ENCODE measurements at regions of chr22 and their contacts with region 1.

Region 1: DNA sequence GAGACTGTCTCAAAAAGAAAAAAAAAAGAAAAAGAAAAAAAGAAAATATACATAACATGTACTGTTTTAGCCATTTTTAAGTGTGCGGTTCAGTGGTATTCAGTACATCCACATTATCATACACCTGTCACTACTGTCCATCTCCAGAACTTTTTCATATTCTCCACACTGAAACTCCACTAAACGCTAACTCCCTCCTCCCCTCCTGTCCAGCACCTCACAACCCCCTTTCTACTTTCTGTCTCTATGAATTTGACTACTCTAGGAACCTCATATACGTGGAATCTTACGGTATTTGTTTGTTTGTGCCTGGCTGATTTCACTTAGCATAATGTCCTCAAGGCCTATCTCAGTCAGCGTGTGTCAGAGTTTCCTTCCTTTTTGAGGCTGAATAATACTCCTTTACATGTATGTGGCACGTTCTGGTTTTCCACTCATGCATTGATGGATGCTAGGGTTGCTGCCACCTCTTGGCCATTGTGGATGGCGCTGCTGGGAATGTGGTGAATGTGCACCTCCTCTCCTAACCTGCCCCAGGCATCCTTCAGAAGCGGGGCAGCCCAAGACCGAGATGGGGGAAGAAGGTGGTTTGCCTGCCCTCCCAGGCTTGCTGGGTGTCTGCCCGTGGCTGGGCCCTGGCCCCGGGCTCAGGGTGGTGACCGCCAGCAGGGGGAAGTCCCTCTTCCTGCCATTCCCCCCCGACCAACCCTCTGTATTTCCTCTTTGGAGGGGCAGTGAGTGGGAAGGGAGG is 60.5 kb downstream of the BCR start:
- DNase-seq: peak; percentile 79
- H3K4me3 Mint-ChIP-seq: no peak overlapping the region
- H3K27ac Mint-ChIP-seq: peak overlapping the region; percentile 73
- H3K4me1 Mint-ChIP-seq: peaks cover 93% of the 10 kb centered on the region
- H3K27me3 Mint-ChIP-seq: no peaks in the 10 kb centered on the region

Region 2: DNA sequence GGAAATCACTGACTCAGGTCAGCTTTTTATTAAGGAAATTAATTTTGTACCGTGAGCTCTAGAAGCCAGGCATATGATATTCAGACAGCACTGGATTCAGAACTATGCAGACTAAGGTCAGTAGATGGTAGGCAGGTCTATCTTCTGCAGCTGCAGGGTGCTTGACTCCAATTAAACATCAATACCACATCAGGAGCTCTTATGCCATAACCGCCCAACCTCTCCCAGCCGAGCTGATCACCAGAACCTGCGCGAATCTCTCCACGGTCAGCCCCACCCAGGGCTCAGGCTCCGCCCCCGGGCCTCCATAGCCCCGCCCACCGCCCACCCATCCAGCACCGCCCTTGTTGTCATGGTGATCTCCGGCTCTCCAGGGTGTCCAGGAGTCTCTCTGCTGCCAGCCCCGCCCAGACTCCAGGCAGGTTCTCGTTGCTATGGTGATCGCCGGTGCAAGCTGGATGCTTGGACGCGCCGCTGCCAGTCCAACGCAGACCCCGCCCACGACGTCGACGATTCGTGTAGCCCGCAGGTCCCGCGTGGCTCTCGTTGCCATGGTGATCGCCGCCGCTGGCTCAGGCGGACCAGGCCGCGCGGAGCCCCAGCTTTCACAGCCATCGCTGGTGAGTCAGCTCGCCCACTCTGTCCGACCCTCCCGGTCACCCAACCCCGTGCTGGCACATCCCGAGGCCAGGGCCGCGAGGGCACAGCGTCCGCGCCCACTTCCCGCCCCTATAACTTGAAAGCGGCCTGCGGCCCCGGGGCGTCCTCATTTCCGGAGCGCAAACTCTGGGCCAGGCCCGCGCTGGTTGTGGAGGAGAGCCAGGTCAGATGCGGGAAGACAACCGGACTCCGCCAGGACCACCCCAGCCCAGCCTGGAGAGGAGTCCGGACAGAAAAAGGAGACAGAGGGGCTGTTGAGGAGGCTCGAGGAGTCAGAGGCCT is 95.6 kb before region 1 on chr22 and contains the start of gene RAB36:
- CTCF ChIA-PET with region 1: no interaction called
- intact Hi-C with region 1: loop called (anchors 1 kb)
- DNase-seq: peak; percentile 82
- H3K4me3 Mint-ChIP-seq: peak within 1 kb of the TSS; percentile 63
- H3K27ac Mint-ChIP-seq: no peak within 1 kb of the TSS
- H3K4me1 Mint-ChIP-seq: peaks cover 44% of the 10 kb centered on the region
- H3K27me3 Mint-ChIP-seq: no peaks in the 10 kb centered on the region
- total RNA-seq, gene RAB36: not detected

Region 3: DNA sequence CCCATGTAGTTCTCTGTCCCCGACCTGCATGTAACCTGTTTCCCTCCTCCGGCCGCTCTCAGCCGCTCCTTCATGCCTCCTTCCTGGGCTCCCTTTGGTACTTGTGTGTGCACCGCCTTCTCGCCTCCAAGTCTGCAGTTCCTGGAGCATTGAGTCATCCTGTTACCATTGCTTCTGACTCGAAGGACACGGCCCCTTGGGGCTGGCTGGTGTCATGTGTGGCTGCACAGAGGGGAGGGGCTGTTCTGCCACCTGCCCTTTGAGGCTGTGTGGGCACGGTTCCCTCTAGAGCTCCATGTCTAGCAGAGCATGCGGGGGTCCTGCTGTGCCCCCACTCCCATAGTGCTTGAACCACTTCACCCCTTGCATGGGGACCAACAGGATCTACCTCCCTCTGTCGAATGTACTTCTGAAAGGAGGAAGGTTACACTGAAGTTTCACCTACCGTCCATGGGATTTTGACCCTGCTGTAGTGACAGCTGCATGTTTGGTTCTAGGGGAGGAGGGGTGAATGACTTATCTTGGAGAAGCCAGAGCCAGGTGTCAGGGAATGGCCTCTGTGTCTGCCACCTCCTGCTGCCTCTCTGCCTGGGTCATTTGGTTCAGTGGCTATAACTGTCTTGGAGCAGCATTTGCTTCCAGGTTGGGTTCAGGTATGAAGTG is 20.9 kb before region 1 on chr22:
- CTCF ChIA-PET with region 1: interaction called, 8 read pairs
- intact Hi-C with region 1: loop called (anchors 1 kb)
- DNase-seq: peak; percentile 89
- H3K4me3 Mint-ChIP-seq: peak overlapping the region; percentile 77
- H3K27ac Mint-ChIP-seq: peak overlapping the region; percentile 90
- H3K4me1 Mint-ChIP-seq: peaks cover 97% of the 10 kb centered on the region
- H3K27me3 Mint-ChIP-seq: no peaks in the 10 kb centered on the region

Region 4: DNA sequence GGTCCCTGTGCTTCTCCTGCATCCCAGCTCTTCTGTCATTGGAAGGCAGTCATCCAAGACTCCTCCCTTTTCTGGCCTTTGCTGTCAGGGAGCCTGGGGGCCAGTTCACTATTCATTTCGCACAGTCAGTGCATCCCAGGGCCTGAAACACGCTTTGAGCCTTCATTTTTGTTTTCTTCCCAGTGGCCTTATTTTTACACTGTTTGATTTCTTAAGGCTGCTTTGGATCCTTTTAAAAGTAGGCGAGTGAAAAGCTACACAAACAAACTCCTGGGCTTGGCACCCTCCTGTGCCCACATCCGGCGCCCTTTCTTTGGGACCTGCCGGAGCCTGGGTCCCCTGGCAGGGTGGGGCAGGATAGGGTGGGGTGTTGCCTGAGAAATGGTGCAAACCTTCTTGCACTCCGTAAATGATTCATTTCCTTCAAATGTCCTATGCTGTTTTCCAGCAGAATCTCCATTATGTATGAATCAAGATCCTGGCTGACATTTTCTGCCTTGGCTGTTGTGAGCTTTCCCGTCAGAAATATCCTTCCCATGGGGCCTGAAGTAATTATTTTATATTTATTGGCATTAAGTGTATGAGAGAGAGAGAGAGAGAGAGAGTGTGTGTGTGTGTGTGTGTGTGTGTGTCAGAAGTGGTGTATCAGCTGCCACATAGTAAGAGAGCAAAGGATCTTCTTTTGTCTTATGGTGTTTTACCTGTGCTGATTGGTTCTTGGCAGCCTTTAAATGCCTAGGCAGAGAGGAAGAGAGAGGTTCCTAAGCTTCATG is 14.9 kb before region 1 on chr22:
- CTCF ChIA-PET with region 1: no interaction called
- intact Hi-C with region 1: loop called (anchors 1 kb)
- DNase-seq: peak; percentile 73
- H3K4me3 Mint-ChIP-seq: peak overlapping the region; percentile 11
- H3K27ac Mint-ChIP-seq: peak overlapping the region; percentile 78
- H3K4me1 Mint-ChIP-seq: peaks cover 89% of the 10 kb centered on the region
- H3K27me3 Mint-ChIP-seq: no peaks in the 10 kb centered on the region

Region 5: GRCh38 chr22:23281406-23282088 is 40.7 kb after region 1 on chr22:
- CTCF ChIA-PET with region 1: interaction called, 6 read pairs
- intact Hi-C with region 1: loop called (anchors 5 kb)
- DNase-seq: peak; percentile 91
- H3K4me3 Mint-ChIP-seq: no peak overlapping the region
- H3K27ac Mint-ChIP-seq: no peak overlapping the region
- H3K4me1 Mint-ChIP-seq: peaks cover 20% of the 10 kb centered on the region
- H3K27me3 Mint-ChIP-seq: no peaks in the 10 kb centered on the region